Ovary (tissue), 10 donors: ENCODE measurements at regions of chr20 and their contacts with region 1.

Region 1: GRCh38 chr20:5095931-5096330 is 23.8 kb downstream of the PCNA start:
- DNase-seq: no peak
- H3K4me3 ChIP-seq: no peak overlapping the region
- H3K27ac ChIP-seq: no peak overlapping the region
- H3K4me1 ChIP-seq: no peaks in the 10 kb centered on the region
- H3K27me3 ChIP-seq: no peaks in the 10 kb centered on the region
- CTCF ChIP-seq: no peak
- EP300 ChIP-seq: no peak
- POLR2A ChIP-seq: no peak

Region 2: DNA sequence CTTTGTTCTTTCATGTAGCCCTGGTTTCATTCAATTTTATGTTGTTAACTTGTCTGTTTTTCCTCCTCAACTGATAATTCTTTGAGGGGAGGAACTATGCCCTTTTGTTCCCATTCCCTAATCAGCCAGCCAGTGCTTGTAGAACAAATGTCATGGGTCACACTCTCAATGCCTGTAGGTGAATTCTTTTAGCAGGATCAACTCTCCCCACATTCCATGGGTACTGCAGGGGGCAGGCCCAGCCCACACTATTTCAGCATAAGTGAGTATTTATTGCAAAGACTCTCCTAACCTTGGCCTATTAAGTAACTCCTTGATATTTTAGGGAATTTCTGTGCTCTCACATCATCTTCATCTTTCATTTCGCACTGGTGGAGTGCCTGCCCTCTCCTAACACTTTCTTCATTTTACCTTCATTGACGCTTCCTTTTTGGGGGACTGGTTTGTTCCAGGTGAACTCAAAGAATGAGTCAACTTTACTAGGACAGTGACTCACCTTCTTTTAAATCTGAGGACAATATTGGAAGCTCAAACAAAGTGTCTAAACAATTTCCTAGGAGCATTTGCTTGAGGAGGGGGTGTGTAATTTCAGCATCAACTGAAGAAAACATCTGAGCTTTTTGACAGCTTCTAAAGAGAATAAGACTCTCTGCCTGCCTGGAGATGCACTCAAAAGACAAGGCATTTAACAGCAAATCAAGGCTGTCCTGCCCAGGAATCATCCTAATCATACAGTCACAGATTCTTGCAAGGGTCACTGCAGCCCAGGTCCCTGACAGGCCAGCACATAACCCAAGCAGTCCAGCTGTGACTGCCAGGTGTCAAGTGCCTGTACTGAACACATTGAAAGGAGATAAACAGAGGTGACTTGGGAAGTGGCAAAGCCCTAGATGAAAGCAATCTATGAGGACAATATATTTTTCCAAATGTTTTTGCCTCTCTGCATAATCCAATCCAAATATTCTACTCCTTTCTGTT is 638.1 kb before region 1 on chr20:
- intact Hi-C with region 1: no loop called
- DNase-seq: no peak
- H3K4me3 ChIP-seq: no peak overlapping the region
- H3K27ac ChIP-seq: no peak overlapping the region
- H3K4me1 ChIP-seq: no peaks in the 10 kb centered on the region
- H3K27me3 ChIP-seq: no peaks in the 10 kb centered on the region
- CTCF ChIP-seq: no peak
- EP300 ChIP-seq: no peak
- POLR2A ChIP-seq: no peak

Region 3: DNA sequence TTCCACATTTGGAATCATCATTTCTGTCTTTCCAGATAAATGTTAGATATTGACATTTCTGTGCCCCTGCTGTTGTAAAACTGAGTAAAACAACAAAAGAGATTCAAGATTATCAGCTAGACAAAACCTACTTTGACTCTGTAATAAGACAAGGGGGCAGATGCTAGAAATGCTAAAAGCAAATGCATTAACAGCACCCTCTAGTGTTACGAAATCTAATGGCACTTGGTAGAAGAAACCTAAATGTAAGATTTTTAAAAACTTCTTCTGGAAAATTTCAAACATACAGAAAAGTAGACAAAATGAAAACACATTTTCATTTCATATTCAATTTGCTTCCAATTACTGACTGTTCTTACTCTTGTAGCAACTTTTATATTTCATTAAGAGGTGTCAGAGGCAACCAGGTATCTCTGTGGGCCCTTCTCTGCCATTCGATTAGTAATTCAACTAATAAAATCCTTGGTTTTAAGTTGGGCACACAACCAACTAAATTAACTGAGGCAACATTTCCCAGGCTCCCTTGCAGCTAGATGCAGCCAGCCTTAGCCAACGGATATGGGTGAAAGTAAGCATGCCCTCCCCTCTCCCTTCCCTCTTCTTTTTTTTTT is 139.6 kb before region 1 on chr20:
- intact Hi-C with region 1: loop called in 1 of 4 experiments (anchors 5 kb)
- DNase-seq: no peak
- H3K4me3 ChIP-seq: no peak overlapping the region
- H3K27ac ChIP-seq: no peak overlapping the region
- H3K4me1 ChIP-seq: peaks cover 4% of the 10 kb centered on the region
- H3K27me3 ChIP-seq: no peaks in the 10 kb centered on the region
- CTCF ChIP-seq: peak; percentile 50 to 75 (median 71)
- EP300 ChIP-seq: no peak
- POLR2A ChIP-seq: no peak

Region 4: DNA sequence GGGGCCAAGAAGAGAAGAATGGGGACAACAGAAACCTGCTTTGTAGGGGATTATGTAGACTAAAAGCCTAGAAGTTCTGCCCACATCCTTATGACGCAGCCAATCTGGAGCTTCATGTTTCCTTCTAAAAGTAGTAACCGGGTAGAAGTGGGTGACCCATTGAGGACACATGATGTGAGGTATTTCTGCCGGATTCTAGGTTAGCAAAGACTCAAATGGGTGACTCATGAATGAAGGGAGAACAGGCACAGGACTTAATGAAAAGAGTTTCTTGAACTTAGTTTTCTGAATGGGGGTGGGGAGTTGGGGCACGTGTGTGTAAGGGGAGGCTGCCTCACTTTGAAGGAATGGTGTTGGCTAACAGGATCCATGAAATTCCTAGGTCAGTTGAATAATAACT is 99.7 kb after region 1 on chr20:
- intact Hi-C with region 1: no loop called
- DNase-seq: no peak
- H3K4me3 ChIP-seq: no peak overlapping the region
- H3K27ac ChIP-seq: no peak overlapping the region
- H3K4me1 ChIP-seq: peaks cover 2% of the 10 kb centered on the region
- H3K27me3 ChIP-seq: no peaks in the 10 kb centered on the region
- CTCF ChIP-seq: no peak
- EP300 ChIP-seq: no peak
- POLR2A ChIP-seq: no peak